K562 (cell line): ENCODE measurements at regions of chr17 and their contacts with region 1.

Region 1: GRCh38 chr17:5065227-5065744 is 13.0 kb upstream of the ZFP3 start:
- DNase-seq: no peak
- ATAC-seq: no peak
- H3K4me3 ChIP-seq: no peak overlapping the region
- H3K27ac ChIP-seq: no peak overlapping the region
- H3K4me1 ChIP-seq: no peaks in the 10 kb centered on the region; a peak in 1 of 5 replicates
- H3K27me3 ChIP-seq: no peaks in the 10 kb centered on the region; a peak in 1 of 5 replicates
- CTCF ChIP-seq: no peak
- EP300 ChIP-seq: no peak
- POLR2A ChIP-seq: no peak
- RAD21 ChIP-seq: no peak

Region 2: DNA sequence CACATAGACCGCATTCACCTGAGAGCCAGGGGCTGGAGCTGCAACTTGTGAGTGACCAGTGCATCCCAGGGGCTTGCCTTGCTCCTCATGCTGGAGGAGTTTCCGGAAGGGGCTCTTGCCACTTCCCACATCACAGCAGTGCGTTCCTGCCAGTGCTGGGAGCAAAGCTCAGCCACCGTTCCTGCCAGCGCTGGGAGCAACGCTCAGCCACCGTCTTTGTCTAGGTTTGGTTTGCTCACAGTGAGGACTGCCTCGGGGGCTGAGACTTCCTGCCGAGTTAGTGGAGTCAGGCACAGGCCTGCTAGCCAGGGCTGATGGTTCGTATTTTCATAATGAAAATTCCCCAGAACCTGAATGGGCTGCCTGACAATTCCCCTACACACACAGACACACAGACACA is 157.0 kb before region 1 on chr17:
- CTCF ChIA-PET with region 1: interaction called, 5 read pairs
- POLR2A ChIA-PET with region 1: no interaction called
- in situ Hi-C with region 1: loop called (anchors 10 kb)
- intact Hi-C with region 1: loop called (anchors 1 kb)
- DNase-seq: no peak
- ATAC-seq: no peak
- H3K4me3 ChIP-seq: no peak overlapping the region
- H3K27ac ChIP-seq: no peak overlapping the region; the same call in 2 of the 3 replicates
- H3K4me1 ChIP-seq: peaks cover 5 to 13% of the 10 kb centered on the region in 2 experiments
- H3K27me3 ChIP-seq: no peaks in the 10 kb centered on the region; a peak in 1 of 5 replicates
- CTCF ChIP-seq: no peak
- EP300 ChIP-seq: no peak
- POLR2A ChIP-seq: no peak
- RAD21 ChIP-seq: no peak

Region 3: DNA sequence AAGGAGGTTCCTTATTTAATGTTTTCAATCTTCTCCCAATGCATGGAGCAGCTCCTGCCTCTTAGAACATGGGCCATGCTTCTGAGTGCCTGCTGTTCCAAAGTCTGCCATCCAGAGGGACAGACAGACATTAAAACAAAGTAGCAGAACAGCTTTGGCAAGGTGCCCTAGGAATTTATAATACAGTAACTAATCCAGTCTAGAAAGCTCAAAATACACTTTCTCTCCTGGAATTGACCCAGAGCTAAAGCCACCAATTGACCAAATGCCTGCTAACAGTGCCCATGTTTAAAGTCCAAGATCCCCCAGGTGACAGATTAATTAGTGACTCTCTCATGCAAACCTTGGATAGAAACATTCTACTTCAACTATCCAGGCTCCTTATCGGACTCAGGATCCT is 151.3 kb before region 1 on chr17:
- CTCF ChIA-PET with region 1: interaction called, 3 read pairs
- POLR2A ChIA-PET with region 1: no interaction called
- in situ Hi-C with region 1: loop called (anchors 10 kb)
- intact Hi-C with region 1: loop called (anchors 1 kb)
- DNase-seq: no peak
- ATAC-seq: no peak
- H3K4me3 ChIP-seq: no peak overlapping the region
- H3K27ac ChIP-seq: no peak overlapping the region
- H3K4me1 ChIP-seq: peaks cover 0 to 5% of the 10 kb centered on the region in 2 experiments; a peak in 4 of 5 replicates
- H3K27me3 ChIP-seq: no peaks in the 10 kb centered on the region
- CTCF ChIP-seq: no peak
- EP300 ChIP-seq: no peak
- POLR2A ChIP-seq: no peak
- RAD21 ChIP-seq: no peak

Region 4: GRCh38 chr17:4980644-4981216 is 84.6 kb before region 1 on chr17:
- CTCF ChIA-PET with region 1: interaction called, 16 read pairs
- POLR2A ChIA-PET with region 1: interaction called, 4 read pairs
- in situ Hi-C with region 1: no loop called
- intact Hi-C with region 1: loop called (anchors 1 kb)
- DNase-seq: peak; percentile 60 to 66 (median 66)
- ATAC-seq: peak; percentile 90
- H3K4me3 ChIP-seq: no peak overlapping the region
- H3K27ac ChIP-seq: no peak overlapping the region
- H3K4me1 ChIP-seq: peaks cover 0 to 6% of the 10 kb centered on the region in 2 experiments; a peak in 1 of 5 replicates
- H3K27me3 ChIP-seq: no peaks in the 10 kb centered on the region
- CTCF ChIP-seq: peak; percentile 54 to 64 (median 60); a peak in 5 of 6 replicates
- EP300 ChIP-seq: no peak
- POLR2A ChIP-seq: no peak
- RAD21 ChIP-seq: peak in 1 of 2 experiments; percentile 52; a peak in 2 of 4 replicates